HEK293 (cell line): ENCODE measurements at regions of chr11 and their contacts with region 1.

Region 1: DNA sequence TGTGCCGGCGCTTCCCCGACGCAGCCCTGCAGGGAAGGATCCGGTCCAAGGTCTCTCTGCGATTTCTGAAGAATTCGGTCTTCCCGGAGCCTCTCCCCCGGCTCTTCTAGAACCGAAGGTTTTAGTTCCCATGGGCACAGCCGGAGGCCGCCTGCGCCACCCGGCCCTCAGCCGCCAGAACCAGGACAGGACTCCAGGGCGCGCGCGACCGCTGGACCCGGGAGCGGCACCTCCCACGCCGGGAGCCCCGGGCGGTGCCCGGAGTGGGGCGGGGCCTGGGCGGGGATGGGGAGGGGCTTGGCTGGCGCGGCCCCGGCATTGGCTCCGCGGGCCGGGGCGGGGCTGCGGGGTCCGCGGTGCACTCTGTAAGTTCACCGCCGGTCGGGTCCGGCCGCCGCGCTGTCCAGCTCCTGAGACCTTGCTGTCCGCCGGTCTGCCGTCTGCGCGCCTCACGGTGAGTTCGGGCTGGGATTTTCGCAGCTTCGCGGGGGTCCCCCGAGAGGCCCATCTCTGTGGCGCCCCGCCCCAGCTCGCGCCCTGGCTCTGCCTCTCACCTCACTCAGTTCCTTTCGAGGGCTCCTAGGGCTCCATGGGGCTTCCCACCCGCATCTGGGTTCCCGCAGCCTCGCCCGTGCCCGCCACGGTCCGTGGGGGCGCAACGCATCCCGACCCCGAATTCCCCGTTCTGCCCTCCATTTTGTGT is at the start of gene CDC42EP2:
- H3K4me3 ChIP-seq: peak within 1 kb of the TSS; percentile 67
- H3K27ac ChIP-seq: peak within 1 kb of the TSS; percentile 60; the same call in 1 of the 2 replicates
- H3K4me1 ChIP-seq: no peaks in the 10 kb centered on the region
- CTCF ChIP-seq: peak; percentile 38

Region 2: GRCh38 chr11:65261591-65262380 is 52.9 kb before region 1 on chr11 and contains the start of gene POLA2:
- CTCF ChIA-PET with region 1: interaction called, 8 read pairs
- POLR2A ChIA-PET with region 1: interaction called, 14 read pairs
- H3K4me3 ChIP-seq: peak within 1 kb of the TSS; percentile 79
- H3K27ac ChIP-seq: peak within 1 kb of the TSS; percentile 70
- H3K4me1 ChIP-seq: no peaks in the 10 kb centered on the region
- CTCF ChIP-seq: no peak

Region 3: GRCh38 chr11:65274735-65275682 is 39.6 kb before region 1 on chr11:
- CTCF ChIA-PET with region 1: interaction called, 109 read pairs
- POLR2A ChIA-PET with region 1: interaction called, 11 read pairs
- H3K4me3 ChIP-seq: no peak overlapping the region
- H3K27ac ChIP-seq: no peak overlapping the region
- H3K4me1 ChIP-seq: no peaks in the 10 kb centered on the region
- CTCF ChIP-seq: 0 out of 2 replicates have a peak, but pooled peaks have one; percentile 43

Region 4: DNA sequence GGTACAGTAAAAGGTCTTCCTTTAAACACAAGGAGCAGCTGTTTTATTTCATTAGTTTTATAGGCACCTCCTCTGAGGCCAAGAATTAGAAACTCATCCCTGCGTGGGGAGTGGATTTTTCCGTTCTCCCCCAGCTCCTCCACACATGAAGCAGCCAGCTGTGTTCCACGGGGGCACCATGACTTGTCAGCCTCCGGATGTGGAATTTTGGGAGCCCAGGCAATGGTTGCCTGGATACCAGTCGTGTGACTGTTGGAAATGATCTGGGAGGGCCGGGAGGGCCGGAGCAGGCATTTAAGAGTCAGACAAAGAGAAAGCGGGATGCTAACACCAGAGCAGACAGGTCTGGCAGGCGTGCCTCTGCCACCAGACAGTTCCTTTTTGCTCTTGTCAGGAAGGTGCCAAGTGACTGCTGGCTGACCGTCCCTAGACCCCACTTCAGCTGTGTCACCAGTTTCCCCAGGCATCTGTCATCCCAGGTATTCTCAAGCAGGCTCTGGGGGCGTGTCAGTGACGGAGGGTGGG is 15.9 kb before region 1 on chr11:
- CTCF ChIA-PET with region 1: interaction called, 36 read pairs
- POLR2A ChIA-PET with region 1: interaction called, 4 read pairs
- H3K4me3 ChIP-seq: no peak overlapping the region
- H3K27ac ChIP-seq: no peak overlapping the region
- H3K4me1 ChIP-seq: no peaks in the 10 kb centered on the region
- CTCF ChIP-seq: no peak

Region 5: DNA sequence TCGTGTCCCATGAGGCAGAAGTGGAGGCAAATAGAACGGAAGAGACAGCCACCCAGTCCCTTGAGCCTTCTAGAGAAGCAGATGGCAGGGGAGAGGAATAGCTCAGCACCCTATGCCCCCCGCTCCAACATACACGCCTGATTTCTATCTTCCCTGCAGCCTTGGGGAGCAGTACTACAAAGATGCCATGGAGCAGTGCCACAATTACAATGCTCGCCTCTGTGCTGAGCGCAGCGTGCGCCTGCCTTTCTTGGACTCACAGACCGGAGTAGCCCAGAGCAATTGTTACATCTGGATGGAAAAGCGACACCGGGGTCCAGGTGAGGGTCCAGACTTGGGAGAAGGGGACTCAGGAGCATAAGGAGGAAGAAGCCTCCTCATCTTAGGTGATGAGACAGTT is 25.6 kb after region 1 on chr11:
- CTCF ChIA-PET with region 1: interaction called, 206 read pairs
- POLR2A ChIA-PET with region 1: interaction called, 17 read pairs
- H3K4me3 ChIP-seq: no peak overlapping the region
- H3K27ac ChIP-seq: no peak overlapping the region
- H3K4me1 ChIP-seq: no peaks in the 10 kb centered on the region
- CTCF ChIP-seq: no peak